ENCODE measurements at regions of chr11 and their contacts with region 1.

Region 1: GRCh38 chr11:88363566-88364169 is 26.1 kb upstream of the CTSC start:
- DNase-seq: no peak
- ATAC-seq: no peak
- H3K4me3 ChIP-seq: no peak overlapping the region
- H3K4me3 Mint-ChIP-seq: no peak overlapping the region
- H3K27ac ChIP-seq: peak overlapping the region in 1 of 2 donors; percentile 6
- H3K27ac Mint-ChIP-seq: no peak overlapping the region
- H3K4me1 ChIP-seq: peaks cover 8% of the 10 kb centered on the region
- H3K4me1 Mint-ChIP-seq: peaks cover 48% of the 10 kb centered on the region
- H3K27me3 ChIP-seq: no peaks in the 10 kb centered on the region
- H3K27me3 Mint-ChIP-seq: no peaks in the 10 kb centered on the region
- CTCF ChIP-seq: no peak

Region 2: GRCh38 chr11:88327061-88327460 is 36.6 kb before region 1 on chr11:
- CTCF ChIA-PET with region 1: no interaction called
- POLR2A ChIA-PET with region 1: interaction called, 3 read pairs
- intact Hi-C with region 1: loop called in 1 of 2 experiments (anchors 5 kb)
- DNase-seq: no peak
- ATAC-seq: no peak
- H3K4me3 ChIP-seq: no peak overlapping the region
- H3K4me3 Mint-ChIP-seq: no peak overlapping the region
- H3K27ac ChIP-seq: no peak overlapping the region
- H3K27ac Mint-ChIP-seq: peak overlapping the region; percentile 10
- H3K4me1 ChIP-seq: peaks cover 24% of the 10 kb centered on the region
- H3K4me1 Mint-ChIP-seq: peaks cover 98% of the 10 kb centered on the region
- H3K27me3 ChIP-seq: no peaks in the 10 kb centered on the region
- H3K27me3 Mint-ChIP-seq: no peaks in the 10 kb centered on the region
- CTCF ChIP-seq: no peak

Region 3: GRCh38 chr11:88404932-88405710 is 41.5 kb after region 1 on chr11:
- CTCF ChIA-PET with region 1: no interaction called
- POLR2A ChIA-PET with region 1: no interaction called
- intact Hi-C with region 1: loop called in 1 of 2 experiments (anchors 5 kb)
- DNase-seq: no peak
- ATAC-seq: no peak
- H3K4me3 ChIP-seq: no peak overlapping the region
- H3K4me3 Mint-ChIP-seq: no peak overlapping the region
- H3K27ac ChIP-seq: no peak overlapping the region
- H3K27ac Mint-ChIP-seq: no peak overlapping the region
- H3K4me1 ChIP-seq: no peaks in the 10 kb centered on the region
- H3K4me1 Mint-ChIP-seq: peaks cover 21% of the 10 kb centered on the region
- H3K27me3 ChIP-seq: no peaks in the 10 kb centered on the region
- H3K27me3 Mint-ChIP-seq: no peaks in the 10 kb centered on the region
- CTCF ChIP-seq: no peak